ENCODE measurements at regions of chr9 and their contacts with region 1.

Region 1: GRCh38 chr9:127943731-127944144 is 6.1 kb upstream of the DPM2 start:
- DNase-seq: no peak
- H3K4me3 ChIP-seq: no peak overlapping the region
- CTCF ChIP-seq: peak; percentile 98

Region 2: GRCh38 chr9:127930231-127931091 is 13.3 kb before region 1 on chr9 and contains the start of gene PIP5KL1:
- CTCF ChIA-PET with region 1: interaction called, 26 read pairs
- POLR2A ChIA-PET with region 1: no interaction called
- DNase-seq: no peak
- H3K4me3 ChIP-seq: peak within 1 kb of the TSS; percentile 70
- CTCF ChIP-seq: peak; percentile 21

Region 3: DNA sequence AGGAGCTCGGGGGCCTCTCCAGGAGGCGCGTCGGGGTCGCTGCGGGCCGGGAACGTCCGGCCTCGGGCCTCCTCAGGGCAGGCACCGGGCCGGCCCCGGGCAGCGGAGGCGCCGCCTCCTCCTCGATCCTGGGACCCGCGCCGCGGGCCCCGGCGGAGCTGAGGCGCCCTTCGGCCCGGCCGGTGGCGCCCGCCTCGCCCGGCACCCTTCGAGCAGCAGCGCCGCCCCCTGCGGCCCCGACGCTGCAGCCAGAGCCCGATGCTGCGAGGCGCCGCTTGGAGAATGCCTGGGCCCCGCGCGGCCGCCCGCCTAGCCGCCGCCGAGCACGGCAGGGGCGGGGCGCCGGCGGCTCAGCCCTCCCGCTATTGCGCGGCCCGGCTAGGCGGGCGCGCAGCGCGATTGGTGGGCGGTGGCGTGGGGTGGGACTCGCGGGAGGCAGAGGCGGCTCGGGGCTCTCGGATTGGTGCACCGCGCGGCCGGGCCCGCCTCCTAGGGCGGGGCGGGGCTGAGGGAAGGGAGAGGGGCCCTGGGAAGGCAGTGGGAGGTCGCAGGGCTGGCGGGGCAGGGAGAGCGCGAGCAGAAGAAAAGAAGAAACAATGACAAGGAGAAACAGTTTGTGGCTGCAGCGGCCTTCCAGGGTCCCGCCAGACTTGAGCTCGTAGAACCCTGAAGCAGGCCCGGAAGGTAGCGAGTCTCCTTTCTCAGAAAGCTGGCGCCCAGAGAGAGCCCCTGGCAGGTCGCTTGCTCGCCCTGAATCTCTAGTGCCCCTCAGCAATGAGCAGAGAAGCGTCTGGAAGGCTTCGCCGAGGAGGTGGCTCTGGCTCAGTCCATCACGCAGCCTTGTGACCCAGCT is 37.2 kb after region 1 on chr9 and contains the start of gene EEIG1:
- CTCF ChIA-PET with region 1: interaction called, 43 read pairs
- POLR2A ChIA-PET with region 1: no interaction called
- DNase-seq: peak; percentile 19
- H3K4me3 ChIP-seq: peak within 1 kb of the TSS; percentile 76
- CTCF ChIP-seq: no peak

Region 4: DNA sequence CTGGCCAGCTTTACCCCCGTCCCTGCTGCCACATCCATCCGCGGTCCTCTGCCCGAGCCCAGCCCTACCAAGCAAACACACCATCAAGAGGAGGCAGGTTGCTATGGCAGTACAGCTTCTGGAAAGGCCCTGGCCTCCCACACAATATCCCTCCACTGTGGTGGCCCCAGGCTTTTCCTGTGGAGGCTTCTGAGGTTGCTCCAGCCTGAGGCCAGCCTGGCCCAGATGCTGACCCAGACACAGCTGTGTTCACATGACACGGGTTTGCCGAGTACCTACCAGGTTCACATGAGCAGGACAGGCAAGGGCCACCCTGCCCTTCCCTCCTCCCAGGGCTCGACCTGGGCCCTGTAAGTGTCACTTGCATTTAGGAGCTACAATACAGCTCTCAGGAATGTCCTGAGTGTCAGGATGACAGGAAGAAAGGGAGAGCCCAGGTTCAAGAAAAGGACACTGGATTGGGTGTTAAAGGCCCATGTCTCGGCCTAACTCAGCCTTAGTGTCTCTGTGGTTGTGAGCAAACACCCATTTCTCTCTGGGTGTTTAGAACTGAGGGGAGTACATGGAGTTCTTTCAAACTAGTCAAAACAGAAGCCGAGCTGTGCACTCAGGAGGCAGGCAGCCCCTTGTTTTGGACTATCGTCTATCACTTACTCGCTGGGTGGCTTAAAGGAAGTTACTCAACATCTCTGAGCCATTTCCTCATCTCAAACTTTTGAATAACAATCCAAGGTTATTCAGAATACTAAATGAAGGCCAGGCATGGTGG is 83.2 kb after region 1 on chr9:
- CTCF ChIA-PET with region 1: interaction called, 173 read pairs
- POLR2A ChIA-PET with region 1: no interaction called
- DNase-seq: no peak
- H3K4me3 ChIP-seq: no peak overlapping the region
- CTCF ChIP-seq: no peak

Region 5: DNA sequence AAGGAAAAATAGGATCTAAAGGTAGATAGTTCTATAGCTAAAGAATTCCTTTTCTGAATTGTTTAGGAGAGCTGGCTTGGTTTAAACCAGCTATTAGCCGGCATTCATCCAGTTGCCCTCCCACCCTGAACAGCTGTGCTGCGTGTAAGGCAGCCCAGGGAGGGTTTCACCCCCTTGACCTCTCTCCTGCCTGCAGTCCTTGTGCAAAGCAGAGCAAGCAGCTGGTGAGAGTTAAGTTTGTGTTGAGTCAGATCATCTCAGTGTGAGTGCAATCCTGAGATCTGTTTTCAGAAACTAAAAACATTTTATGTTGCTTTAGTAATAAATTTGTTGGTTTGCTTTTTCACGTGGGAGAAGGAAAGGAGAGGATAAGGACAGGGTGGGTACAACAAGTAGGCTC is 137.3 kb after region 1 on chr9:
- CTCF ChIA-PET with region 1: interaction called, 36 read pairs
- POLR2A ChIA-PET with region 1: no interaction called
- DNase-seq: peak; percentile 70
- H3K4me3 ChIP-seq: no peak overlapping the region
- CTCF ChIP-seq: no peak

Region 6: GRCh38 chr9:128103589-128103962 is 159.8 kb after region 1 on chr9:
- CTCF ChIA-PET with region 1: interaction called, 131 read pairs
- POLR2A ChIA-PET with region 1: interaction called, 3 read pairs
- DNase-seq: no peak
- H3K4me3 ChIP-seq: no peak overlapping the region
- CTCF ChIP-seq: no peak